ENCODE measurements at regions of chr16 and their contacts with region 1.

Region 1: GRCh38 chr16:17038415-17038814 is 432.3 kb downstream of the XYLT1 start:
- DNase-seq: no peak
- CTCF ChIP-seq: no peak

Region 2: GRCh38 chr16:17098685-17099084 is 60.3 kb after region 1 on chr16:
- in situ Hi-C with region 1: loop called (anchors 10 kb)
- DNase-seq: no peak
- CTCF ChIP-seq: no peak

Region 3: DNA sequence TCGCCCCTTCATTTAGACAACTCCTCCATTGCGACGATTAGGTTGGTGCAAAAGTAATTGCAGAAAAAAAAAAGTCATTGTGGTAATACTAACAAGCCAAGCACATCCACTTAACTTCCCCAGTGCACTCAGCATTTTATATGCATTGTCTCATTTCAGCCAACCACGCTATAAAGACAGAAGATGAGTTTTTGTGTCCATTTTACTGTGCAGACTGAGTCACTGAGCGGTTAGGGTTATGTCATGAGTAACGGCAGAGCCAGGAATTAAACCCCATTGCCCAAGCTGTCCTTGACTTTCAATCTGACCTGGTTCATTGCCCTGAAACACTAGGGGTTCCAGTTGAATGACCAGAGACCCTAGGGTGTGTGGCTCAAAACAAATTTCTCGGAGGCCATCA is 213.6 kb after region 1 on chr16:
- in situ Hi-C with region 1: no loop called
- DNase-seq: no peak
- CTCF ChIP-seq: no peak

Measured in GM13976 (cell line).